Panc1 (cell line): ENCODE measurements at regions of chr1 and their contacts with region 1.

Region 1: GRCh38 chr1:10694633-10695627 is 101.5 kb downstream of the CASZ1 start:
- DNase-seq: peak; percentile 28
- ATAC-seq: peak; percentile 91
- H3K4me3 ChIP-seq: peak overlapping the region; percentile 27 to 41
- H3K27ac ChIP-seq: peak overlapping the region; percentile 34; the same call in 1 of the 2 replicates
- H3K4me1 ChIP-seq: peaks cover 23% of the 10 kb centered on the region
- H3K27me3 ChIP-seq: no peaks in the 10 kb centered on the region
- CTCF ChIP-seq: no peak

Region 2: DNA sequence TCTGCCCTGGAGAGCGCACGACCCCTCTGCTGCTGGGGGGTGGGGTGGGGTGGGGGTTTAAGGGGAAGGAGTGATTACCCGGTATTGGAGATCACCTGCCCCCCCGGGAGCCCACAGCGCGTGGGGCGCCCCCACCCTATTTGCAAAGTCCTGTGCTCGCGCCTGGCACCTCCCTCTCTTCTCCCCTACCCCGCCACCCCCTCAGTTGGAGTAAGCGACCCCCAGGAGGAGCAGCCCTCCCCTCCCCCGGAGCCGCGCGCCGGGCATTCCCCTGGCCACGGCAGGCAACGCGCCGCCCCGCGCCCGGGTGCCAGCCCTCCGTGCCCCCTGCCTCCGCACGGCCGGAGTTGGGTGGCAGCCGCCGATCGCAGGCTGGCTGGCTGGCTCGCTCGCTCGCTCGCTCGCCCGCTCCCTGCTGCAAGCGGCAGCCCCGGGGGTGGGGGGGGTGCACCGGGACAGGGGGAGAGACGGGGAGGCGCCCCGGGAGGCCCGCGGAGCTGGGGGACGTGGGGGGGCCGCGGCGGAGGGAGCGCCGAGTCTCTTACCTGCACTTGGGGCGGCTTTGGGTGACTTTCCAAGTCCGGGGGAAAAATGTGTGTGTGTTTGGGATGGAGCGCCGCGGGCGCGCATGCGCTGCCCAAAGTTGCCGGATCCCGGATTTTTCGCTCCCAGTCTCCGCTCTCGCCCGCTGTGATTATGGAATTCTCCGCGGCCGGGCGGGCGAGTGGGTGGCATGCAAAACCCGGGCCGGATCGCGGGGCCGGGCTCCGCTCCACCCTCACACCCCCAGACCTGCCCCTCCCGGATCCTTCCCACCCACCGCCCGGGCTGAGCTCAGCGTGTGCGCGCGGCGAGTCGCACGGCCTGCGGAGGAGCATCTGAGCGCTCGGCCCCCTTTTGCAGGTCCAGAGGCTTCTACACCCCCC is 101.4 kb after region 1 on chr1 and contains the start of gene CASZ1:
- CTCF ChIA-PET with region 1: no interaction called
- POLR2A ChIA-PET with region 1: no interaction called
- in situ Hi-C with region 1: no loop called
- intact Hi-C with region 1: loop called (anchors 5 kb)
- DNase-seq: peak; percentile 62
- ATAC-seq: peak; percentile 73
- H3K4me3 ChIP-seq: peak within 1 kb of the TSS; percentile 69 to 76
- H3K27ac ChIP-seq: peak within 1 kb of the TSS; percentile 86
- H3K4me1 ChIP-seq: peaks cover 14% of the 10 kb centered on the region
- H3K27me3 ChIP-seq: no peaks in the 10 kb centered on the region
- CTCF ChIP-seq: no peak
- total RNA-seq, gene CASZ1: 27.8 TPM

Region 3: GRCh38 chr1:10867138-10867721 is 172.3 kb after region 1 on chr1:
- CTCF ChIA-PET with region 1: interaction called, 3 read pairs
- POLR2A ChIA-PET with region 1: no interaction called
- in situ Hi-C with region 1: no loop called
- intact Hi-C with region 1: loop called (anchors 5 kb)
- DNase-seq: no peak
- ATAC-seq: peak; percentile 92
- H3K4me3 ChIP-seq: peak overlapping the region; percentile 30 to 46
- H3K27ac ChIP-seq: peak overlapping the region; percentile 65
- H3K4me1 ChIP-seq: peaks cover 16% of the 10 kb centered on the region
- H3K27me3 ChIP-seq: no peaks in the 10 kb centered on the region
- CTCF ChIP-seq: peak; percentile 95

Region 4: DNA sequence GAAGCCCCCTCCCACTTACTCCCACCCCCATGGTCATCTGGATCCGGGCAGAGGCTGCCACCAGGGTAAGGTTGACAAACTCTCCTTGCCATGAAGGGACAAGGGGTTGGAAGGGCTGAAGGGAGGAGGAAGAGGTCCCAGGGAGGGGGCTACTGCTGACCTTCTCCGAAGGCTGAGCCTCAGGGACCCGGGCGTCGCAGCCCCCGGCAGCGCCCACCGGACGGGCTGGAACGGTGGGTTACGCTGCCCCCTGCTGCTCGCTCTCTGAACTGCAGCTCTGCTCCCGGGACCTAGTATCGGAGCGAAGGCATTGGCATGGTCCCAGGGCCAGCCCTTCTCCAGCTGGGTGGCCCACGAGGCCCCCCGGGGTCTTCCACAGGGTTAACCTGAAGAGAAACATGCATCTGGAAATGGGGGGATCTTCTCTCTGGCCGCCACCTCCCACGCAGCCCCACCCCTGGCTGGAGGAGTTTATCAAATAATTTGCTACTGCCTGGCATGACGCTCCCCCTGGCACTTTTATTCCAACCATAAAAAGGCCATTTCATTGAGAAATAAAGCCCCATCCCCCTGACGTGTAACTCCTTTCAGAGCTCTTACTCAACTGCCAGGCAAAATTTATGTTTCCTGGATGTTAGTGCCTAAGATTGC is 247.1 kb after region 1 on chr1:
- CTCF ChIA-PET with region 1: no interaction called
- POLR2A ChIA-PET with region 1: no interaction called
- in situ Hi-C with region 1: no loop called
- intact Hi-C with region 1: loop called (anchors 5 kb)
- DNase-seq: peak; percentile 35
- ATAC-seq: peak; percentile 43
- H3K4me3 ChIP-seq: peak overlapping the region in 1 of 2 experiments; percentile 31; a peak in 2 of 4 replicates
- H3K27ac ChIP-seq: no peak overlapping the region
- H3K4me1 ChIP-seq: peaks cover 11% of the 10 kb centered on the region
- H3K27me3 ChIP-seq: no peaks in the 10 kb centered on the region
- CTCF ChIP-seq: peak; percentile 98